ENCODE measurements at regions of chr6 and their contacts with region 1.

Region 1: DNA sequence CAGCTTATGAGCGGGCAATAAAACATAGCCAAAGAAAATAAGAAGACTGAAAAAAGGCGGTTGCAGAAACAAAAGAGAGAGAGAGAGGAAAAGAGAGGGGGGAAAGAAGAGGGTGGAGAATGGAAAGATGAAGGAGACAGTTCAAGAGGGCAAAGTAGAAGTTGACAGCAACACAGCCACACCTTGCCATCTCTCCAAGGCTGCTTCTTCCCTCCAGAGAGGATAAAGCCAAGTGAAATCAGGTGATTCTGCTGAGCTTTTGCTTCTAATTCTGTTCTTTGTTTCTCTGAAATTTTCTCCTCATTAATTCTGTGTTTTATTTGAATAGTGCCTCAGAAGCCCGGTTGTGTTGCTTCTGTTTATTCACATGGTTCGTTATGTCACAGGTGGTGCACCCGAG is 48.5 kb downstream of the PTPRK start:
- DNase-seq: no peak
- H3K4me3 Mint-ChIP-seq: no peak overlapping the region
- H3K27ac Mint-ChIP-seq: no peak overlapping the region
- H3K4me1 Mint-ChIP-seq: peaks cover 24% of the 10 kb centered on the region
- H3K27me3 Mint-ChIP-seq: no peaks in the 10 kb centered on the region
- CTCF ChIP-seq: no peak

Region 2: DNA sequence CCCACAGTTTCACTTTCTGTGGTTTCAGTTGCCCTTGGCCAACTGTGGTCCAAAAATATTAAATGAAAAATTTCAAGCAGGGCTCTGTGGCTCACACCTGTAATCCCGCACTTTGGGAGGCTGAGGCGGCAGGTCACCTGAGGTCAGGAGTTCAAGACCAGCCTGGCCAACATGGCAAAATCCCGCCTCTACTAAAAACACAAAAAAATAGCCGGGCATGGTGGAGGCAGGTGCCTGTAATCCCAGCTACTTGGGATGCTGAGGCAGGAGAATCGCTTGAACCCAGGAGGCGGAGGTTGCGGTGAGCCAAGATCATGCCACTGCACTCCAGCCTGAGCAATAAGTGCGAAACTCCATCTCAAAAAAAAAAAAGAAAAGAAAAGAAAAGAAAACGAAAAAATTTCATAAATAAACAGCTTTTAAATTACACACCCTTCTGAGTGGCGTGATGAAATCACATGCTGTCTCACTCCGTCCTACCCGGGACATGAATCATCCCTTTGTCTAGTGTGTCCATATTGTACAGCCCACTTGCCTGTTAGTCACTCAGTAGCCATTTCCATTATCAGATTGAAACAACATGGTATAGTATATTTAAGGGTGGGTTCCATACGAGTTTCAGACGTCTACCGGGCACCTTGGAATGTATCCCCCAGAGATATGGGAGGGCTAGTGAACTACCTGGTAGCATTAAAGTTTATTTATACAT is 36.8 kb after region 1 on chr6:
- CTCF ChIA-PET with region 1: no interaction called
- POLR2A ChIA-PET with region 1: interaction called, 3 read pairs
- intact Hi-C with region 1: loop called (anchors 2 kb)
- DNase-seq: peak; percentile 95
- H3K4me3 Mint-ChIP-seq: peak overlapping the region; percentile 68
- H3K27ac Mint-ChIP-seq: peak overlapping the region; percentile 85
- H3K4me1 Mint-ChIP-seq: peaks cover 49% of the 10 kb centered on the region
- H3K27me3 Mint-ChIP-seq: no peaks in the 10 kb centered on the region
- CTCF ChIP-seq: no peak

Measured in MCF 10A (cell line).